ENCODE measurements at regions of chr11 and their contacts with region 1.

Region 1: GRCh38 chr11:121591405-121592033 is 138.8 kb upstream of the SORL1-AS1 start:
- DNase-seq: peak; percentile 56
- H3K4me3 Mint-ChIP-seq: no peak overlapping the region
- H3K27ac Mint-ChIP-seq: no peak overlapping the region
- H3K4me1 Mint-ChIP-seq: peaks cover 21% of the 10 kb centered on the region
- H3K27me3 Mint-ChIP-seq: no peaks in the 10 kb centered on the region

Region 2: DNA sequence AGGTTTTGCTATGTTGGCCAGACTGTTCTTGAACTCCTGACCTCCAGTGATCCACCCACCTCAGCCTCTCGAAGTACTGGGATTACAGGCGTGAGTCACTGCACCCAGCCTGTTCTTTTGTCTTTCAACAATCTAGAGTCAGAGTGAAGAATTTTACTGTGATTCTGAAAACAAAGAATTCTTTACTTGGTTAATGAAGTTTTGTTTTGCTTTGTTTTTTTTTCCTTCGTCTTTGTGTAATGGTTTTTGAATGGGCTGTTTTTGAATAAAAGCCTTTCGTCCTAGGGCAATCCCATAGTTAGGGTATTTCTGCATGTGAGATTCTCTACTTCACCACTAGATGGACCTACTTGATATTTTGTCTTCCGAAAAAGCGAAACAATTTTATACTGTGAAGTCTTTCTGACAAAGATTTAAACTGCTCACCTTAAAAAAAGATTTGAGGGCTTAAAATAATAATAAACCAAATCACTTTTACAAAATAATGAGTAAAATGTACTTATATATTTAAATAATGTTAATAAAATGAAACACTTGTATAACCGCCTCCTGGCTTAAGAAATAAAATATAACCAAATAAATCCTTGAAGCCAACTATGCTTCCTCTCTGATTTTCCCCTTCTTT is 342.4 kb before region 1 on chr11:
- intact Hi-C with region 1: loop called (anchors 1 kb)
- DNase-seq: no peak
- H3K4me3 Mint-ChIP-seq: no peak overlapping the region
- H3K27ac Mint-ChIP-seq: no peak overlapping the region
- H3K4me1 Mint-ChIP-seq: no peaks in the 10 kb centered on the region
- H3K27me3 Mint-ChIP-seq: peaks cover 10% of the 10 kb centered on the region

Region 3: GRCh38 chr11:121318848-121319834 is 272.4 kb before region 1 on chr11:
- intact Hi-C with region 1: loop called (anchors 1 kb)
- DNase-seq: no peak
- H3K4me3 Mint-ChIP-seq: no peak overlapping the region
- H3K27ac Mint-ChIP-seq: no peak overlapping the region
- H3K4me1 Mint-ChIP-seq: peaks cover 21% of the 10 kb centered on the region
- H3K27me3 Mint-ChIP-seq: peaks cover 9% of the 10 kb centered on the region

Region 4: GRCh38 chr11:121489823-121490222 is 101.7 kb before region 1 on chr11:
- intact Hi-C with region 1: no loop called
- DNase-seq: no peak
- H3K4me3 Mint-ChIP-seq: no peak overlapping the region
- H3K27ac Mint-ChIP-seq: no peak overlapping the region
- H3K4me1 Mint-ChIP-seq: peaks cover 28% of the 10 kb centered on the region
- H3K27me3 Mint-ChIP-seq: no peaks in the 10 kb centered on the region

Region 5: DNA sequence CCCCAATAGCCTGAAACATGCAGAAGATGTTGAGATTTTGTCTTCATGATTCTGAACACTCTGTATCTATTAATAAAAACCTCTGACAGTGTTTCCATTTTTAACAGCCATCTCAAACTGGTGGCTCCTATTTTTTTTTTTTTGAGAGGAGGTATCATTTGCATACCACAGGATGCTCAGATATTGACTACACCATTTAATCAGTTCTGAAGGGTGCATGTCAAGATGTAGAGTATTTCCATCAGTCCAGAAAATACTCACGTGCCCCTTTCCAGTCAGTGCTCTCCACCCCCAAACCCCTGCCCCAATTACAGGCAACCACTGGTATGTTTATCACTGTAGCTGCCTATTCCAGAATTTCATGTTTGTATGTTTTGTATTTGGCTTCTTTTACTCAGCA is 53.5 kb before region 1 on chr11:
- intact Hi-C with region 1: no loop called
- DNase-seq: no peak
- H3K4me3 Mint-ChIP-seq: no peak overlapping the region
- H3K27ac Mint-ChIP-seq: no peak overlapping the region
- H3K4me1 Mint-ChIP-seq: peaks cover 26% of the 10 kb centered on the region
- H3K27me3 Mint-ChIP-seq: no peaks in the 10 kb centered on the region